CD8-positive, alpha-beta T cell (primary cell): ENCODE measurements at regions of chr6 and their contacts with region 1.

Region 1: GRCh38 chr6:11317885-11318771 is 85.7 kb upstream of the NEDD9 start:
- DNase-seq: peak; percentile 17 to 87 (median 62)
- ATAC-seq: peak; percentile 89
- H3K4me3 ChIP-seq: no peak overlapping the region
- H3K4me3 Mint-ChIP-seq: no peak overlapping the region
- H3K27ac ChIP-seq: peak overlapping the region in 1 of 2 experiments; percentile 67
- H3K27ac Mint-ChIP-seq: peak overlapping the region; percentile 72
- H3K4me1 ChIP-seq: no peaks in the 10 kb centered on the region
- H3K4me1 Mint-ChIP-seq: peaks cover 31% of the 10 kb centered on the region
- H3K27me3 ChIP-seq: no peaks in the 10 kb centered on the region
- H3K27me3 Mint-ChIP-seq: no peaks in the 10 kb centered on the region
- CTCF ChIP-seq: no peak

Region 2: DNA sequence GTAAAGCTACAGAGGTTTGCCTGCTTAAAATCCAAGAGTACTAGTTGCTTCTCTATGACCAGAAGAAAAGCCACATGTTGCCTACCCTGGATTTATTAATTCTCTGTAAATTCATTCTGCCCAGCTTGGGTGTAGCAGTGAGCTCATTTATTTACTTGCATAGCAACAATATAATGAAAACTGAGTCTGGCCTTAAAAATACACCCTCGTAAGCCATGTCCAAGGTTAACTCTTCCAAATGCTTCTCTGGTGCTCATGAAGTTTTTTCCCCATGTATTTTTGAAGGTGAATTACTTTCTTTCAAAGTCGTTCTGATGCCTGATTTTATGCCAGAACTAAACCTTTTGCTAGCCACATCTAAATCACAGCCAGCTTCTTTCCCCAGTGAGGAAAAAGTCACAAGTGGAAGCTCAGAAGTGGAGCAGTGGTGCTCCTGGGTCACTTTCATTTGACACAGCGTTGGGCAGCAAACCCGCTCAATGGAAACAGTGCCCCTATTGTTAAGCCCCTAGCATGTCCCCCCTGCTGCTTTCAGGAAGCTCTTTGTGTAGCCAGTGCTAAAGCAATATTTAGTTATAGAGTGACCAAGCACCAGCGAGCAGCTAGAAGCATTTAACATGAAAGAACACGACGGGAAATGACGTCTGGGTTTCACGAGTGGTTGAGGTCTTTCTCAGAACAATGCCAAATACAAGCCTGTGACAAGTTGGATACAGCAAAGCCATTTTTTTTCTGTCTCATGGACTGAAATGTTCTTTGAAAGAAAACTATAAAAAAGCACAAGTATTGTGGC is 115.4 kb before region 1 on chr6:
- CTCF ChIA-PET with region 1: no interaction called
- POLR2A ChIA-PET with region 1: no interaction called
- intact Hi-C with region 1: no loop called
- DNase-seq: peak in 5 of 9 experiments; percentile 7 to 79 (median 22)
- ATAC-seq: peak; percentile 35
- H3K4me3 ChIP-seq: no peak overlapping the region
- H3K4me3 Mint-ChIP-seq: peak overlapping the region; percentile 3
- H3K27ac ChIP-seq: peak overlapping the region in 1 of 2 experiments; percentile 69
- H3K27ac Mint-ChIP-seq: peak overlapping the region; percentile 50
- H3K4me1 ChIP-seq: peaks cover 16% of the 10 kb centered on the region
- H3K4me1 Mint-ChIP-seq: peaks cover 50% of the 10 kb centered on the region
- H3K27me3 ChIP-seq: no peaks in the 10 kb centered on the region
- H3K27me3 Mint-ChIP-seq: no peaks in the 10 kb centered on the region
- CTCF ChIP-seq: no peak

Region 3: DNA sequence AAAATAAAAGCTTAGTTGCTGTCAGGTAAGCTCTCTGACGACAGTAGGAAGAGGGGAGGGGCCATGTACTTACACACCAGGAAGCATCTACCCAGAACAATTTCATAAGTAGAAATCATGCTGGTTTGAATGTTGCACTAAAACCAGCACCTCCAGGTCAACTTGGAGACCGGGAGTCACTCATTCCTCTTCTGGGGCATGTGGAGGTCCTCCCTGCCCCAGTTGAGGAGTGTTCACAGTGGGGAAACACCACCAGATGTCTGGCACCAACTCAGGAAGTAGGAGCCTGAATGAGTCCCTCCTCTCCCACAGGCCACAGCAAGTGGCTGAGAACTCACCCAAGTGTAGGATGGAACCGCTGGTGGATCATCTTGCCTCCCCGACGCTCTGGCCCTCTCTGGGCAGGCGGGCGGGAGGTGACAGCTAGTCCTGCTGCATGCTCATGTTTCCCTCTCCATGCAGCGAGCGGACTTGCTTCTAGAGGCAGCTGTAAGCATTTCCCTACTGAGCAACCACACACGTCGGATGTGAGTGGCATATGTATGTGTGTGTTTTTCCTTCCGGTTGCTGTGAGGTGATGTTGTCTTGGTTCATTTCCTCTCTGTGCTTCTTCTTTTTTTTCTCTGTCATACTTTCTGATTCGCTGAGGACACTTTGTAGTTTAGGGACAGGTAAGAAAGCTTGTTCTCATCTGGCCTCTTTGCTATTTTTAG is 63.8 kb after region 1 on chr6:
- CTCF ChIA-PET with region 1: no interaction called
- POLR2A ChIA-PET with region 1: no interaction called
- intact Hi-C with region 1: loop called in 1 of 2 experiments (anchors 2 kb)
- DNase-seq: peak; percentile 45 to 92 (median 67)
- ATAC-seq: peak; percentile 92
- H3K4me3 ChIP-seq: peak overlapping the region; percentile 66 to 67
- H3K4me3 Mint-ChIP-seq: peak overlapping the region; percentile 91
- H3K27ac ChIP-seq: peak overlapping the region; percentile 79 to 87
- H3K27ac Mint-ChIP-seq: peak overlapping the region; percentile 90
- H3K4me1 ChIP-seq: peaks cover 30% of the 10 kb centered on the region
- H3K4me1 Mint-ChIP-seq: peaks cover 62% of the 10 kb centered on the region
- H3K27me3 ChIP-seq: no peaks in the 10 kb centered on the region
- H3K27me3 Mint-ChIP-seq: no peaks in the 10 kb centered on the region
- CTCF ChIP-seq: no peak